CD4-positive, alpha-beta T cell (primary cell): ENCODE measurements at regions of chr4 and their contacts with region 1.

Region 1: DNA sequence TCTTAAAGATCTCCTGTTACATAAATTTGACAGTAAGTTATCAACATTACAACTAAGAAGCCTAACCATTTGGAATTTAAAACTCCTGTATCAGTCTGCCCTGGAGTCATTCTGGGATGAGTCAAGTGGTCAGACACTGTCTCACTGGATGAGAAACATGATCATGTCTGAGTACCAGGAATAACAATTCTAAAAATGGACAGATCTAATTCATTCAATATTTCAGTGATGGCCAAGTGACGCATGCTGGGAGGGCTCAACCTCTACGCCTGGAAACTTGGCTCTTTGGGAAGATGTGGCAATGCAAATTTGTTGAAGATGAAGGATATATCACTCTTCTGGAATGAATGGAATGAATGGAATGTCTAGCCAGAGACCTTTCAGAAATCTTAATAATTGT is 1427.2 kb downstream of the STIM2 start:
- DNase-seq: no peak
- ATAC-seq: no peak
- H3K4me3 ChIP-seq: no peak overlapping the region
- H3K4me3 Mint-ChIP-seq: no peak overlapping the region
- H3K27ac ChIP-seq: no peak overlapping the region
- H3K27ac Mint-ChIP-seq: no peak overlapping the region
- H3K4me1 ChIP-seq: no peaks in the 10 kb centered on the region
- H3K4me1 Mint-ChIP-seq: no peaks in the 10 kb centered on the region
- H3K27me3 ChIP-seq: no peaks in the 10 kb centered on the region
- H3K27me3 Mint-ChIP-seq: no peaks in the 10 kb centered on the region
- CTCF ChIP-seq: no peak

Region 2: DNA sequence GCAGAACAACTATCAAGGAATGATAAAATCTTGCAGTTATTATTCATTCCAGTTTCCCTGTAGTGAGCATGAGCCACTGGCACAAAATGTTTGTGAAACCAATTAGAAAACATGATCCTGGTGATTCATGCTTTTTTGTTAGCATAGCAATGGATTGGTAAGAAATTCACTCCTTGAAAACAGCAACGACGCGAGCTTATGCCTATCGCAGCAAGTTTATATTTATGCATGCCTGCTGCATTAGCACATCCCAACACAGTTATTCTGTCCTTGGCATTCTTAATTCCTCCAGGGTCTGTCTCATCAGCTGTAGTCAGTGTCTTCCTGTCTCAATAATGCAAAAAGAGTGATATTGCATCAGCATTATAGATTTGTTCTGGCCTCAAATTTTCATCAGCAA is 451.3 kb before region 1 on chr4:
- CTCF ChIA-PET with region 1: no interaction called
- POLR2A ChIA-PET with region 1: no interaction called
- intact Hi-C with region 1: no loop called
- DNase-seq: no peak
- ATAC-seq: no peak
- H3K4me3 ChIP-seq: no peak overlapping the region
- H3K4me3 Mint-ChIP-seq: no peak overlapping the region
- H3K27ac ChIP-seq: no peak overlapping the region
- H3K27ac Mint-ChIP-seq: no peak overlapping the region
- H3K4me1 ChIP-seq: no peaks in the 10 kb centered on the region
- H3K4me1 Mint-ChIP-seq: no peaks in the 10 kb centered on the region
- H3K27me3 ChIP-seq: no peaks in the 10 kb centered on the region
- H3K27me3 Mint-ChIP-seq: no peaks in the 10 kb centered on the region
- CTCF ChIP-seq: no peak

Region 3: DNA sequence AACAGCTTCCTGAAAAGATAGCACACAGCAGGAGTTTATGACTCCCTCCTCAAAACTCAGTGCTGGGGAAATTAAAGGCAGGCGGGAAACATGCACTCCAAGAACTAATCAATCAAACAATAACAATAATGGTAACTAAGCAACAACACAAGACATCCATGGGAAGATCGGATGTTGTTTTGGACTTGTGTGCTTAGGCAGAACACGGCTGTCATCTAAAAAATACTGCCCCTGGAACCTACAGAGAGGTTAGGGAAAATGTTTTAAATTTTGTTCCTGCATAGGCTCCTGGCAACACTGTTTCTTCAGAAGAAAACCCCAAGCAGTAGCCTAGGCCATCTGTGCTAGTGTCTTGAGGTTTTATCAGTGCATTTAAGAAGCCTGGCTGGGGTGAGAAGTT is 49.0 kb before region 1 on chr4:
- CTCF ChIA-PET with region 1: no interaction called
- POLR2A ChIA-PET with region 1: no interaction called
- intact Hi-C with region 1: loop called in 1 of 2 experiments (anchors 5 kb)
- DNase-seq: no peak
- ATAC-seq: no peak
- H3K4me3 ChIP-seq: no peak overlapping the region
- H3K4me3 Mint-ChIP-seq: no peak overlapping the region
- H3K27ac ChIP-seq: no peak overlapping the region
- H3K27ac Mint-ChIP-seq: no peak overlapping the region
- H3K4me1 ChIP-seq: no peaks in the 10 kb centered on the region
- H3K4me1 Mint-ChIP-seq: no peaks in the 10 kb centered on the region
- H3K27me3 ChIP-seq: no peaks in the 10 kb centered on the region
- H3K27me3 Mint-ChIP-seq: no peaks in the 10 kb centered on the region
- CTCF ChIP-seq: no peak